CD4-positive, alpha-beta memory T cell (primary cell): ENCODE measurements at regions of chr2 and their contacts with region 1.

Region 1: DNA sequence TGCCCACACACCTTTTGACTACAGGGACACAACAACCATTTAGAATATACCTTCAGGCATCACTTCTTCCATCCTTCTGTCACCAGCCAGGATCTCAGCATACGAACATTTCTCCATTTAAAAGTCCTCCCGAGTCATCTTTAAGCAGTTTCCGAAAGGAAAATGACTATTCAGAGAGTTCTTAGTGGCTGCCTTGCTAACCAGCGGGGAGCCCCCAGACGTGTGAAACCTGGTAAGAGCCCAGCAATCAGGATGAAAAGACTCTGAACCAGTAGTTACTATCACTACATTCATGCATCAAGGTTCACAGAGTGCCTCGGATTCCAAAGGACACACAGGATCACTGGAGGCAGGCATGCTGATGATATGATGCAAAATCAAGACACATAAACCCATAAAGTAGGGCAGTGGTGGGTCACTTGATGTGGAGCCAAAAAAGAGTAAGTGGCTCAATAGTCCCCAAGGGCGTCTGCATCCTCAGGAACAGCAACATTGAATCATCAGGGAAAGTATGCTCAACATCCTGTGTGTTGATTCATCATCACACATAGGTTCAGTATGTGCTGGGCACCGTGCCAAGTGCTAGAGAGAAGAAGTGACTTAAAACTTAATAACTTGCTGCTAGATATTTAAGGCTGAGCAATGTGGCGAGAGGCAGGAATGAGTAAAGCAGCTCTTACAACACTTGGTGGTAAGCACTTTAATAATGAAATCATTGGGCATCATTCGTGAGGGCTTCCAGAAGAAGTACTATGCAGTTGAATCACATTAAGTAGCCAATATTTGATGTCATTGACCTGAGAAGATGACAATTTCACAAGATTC is 4.4 kb downstream of the CCL20 start:
- DNase-seq: peak; percentile 47 to 89 (median 58)
- H3K4me3 ChIP-seq: no peak overlapping the region
- H3K4me3 Mint-ChIP-seq: peak overlapping the region in 6 of 8 donors; percentile 3 to 53 (median 45)
- H3K27ac ChIP-seq: peak overlapping the region; percentile 40
- H3K27ac Mint-ChIP-seq: peak overlapping the region; percentile 29 to 89 (median 79)
- H3K4me1 ChIP-seq: peaks cover 16% of the 10 kb centered on the region
- H3K4me1 Mint-ChIP-seq: peaks cover 14 to 35% (median 21%) of the 10 kb centered on the region in 4 donors
- H3K27me3 ChIP-seq: no peaks in the 10 kb centered on the region
- H3K27me3 Mint-ChIP-seq: peaks cover 0 to 3% of the 10 kb centered on the region in 2 donors

Region 2: DNA sequence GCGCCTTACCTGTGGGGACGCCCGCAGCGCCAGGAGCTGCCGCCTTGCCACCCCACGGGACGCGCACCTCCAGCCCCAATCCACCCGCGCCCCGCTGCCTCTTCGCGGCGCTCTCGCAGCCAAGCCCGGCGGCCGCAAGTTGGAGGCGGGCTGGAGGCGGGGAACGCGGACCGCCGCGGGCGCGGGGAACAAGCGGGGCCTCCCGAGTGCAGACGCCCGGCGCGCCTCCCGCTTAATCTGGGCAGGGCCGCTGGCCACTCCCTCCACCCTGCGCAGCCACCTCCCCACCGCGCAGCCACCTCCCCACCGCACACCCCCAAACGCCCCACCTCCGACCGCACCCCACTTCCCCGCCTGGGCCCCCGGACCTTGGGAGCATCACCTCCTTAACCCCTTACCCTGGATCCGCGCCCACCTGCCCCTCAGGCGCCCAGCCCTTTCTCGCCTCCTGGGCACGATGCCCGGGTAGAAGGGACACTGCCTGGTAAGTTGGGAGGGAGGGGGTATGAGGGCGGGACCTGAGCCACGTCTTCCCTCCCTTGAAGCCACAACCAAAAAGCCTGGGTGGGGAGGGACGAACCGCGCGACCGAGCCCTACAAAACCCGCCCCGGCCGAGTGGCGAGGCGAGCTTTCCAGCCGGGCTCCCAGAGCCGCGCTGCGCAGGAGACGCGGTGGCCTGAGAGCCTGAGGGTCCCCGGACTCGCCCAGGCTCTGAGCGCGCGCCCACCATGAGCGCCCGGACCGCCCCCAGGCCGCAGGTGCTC is 653.9 kb before region 1 on chr2 and contains the starts of genes COL4A3 and COL4A4:
- CTCF ChIA-PET with region 1: no interaction called
- POLR2A ChIA-PET with region 1: no interaction called
- intact Hi-C with region 1: no loop called
- DNase-seq: no peak
- H3K4me3 ChIP-seq: no peak within 1 kb of the TSS
- H3K4me3 Mint-ChIP-seq: peak within 1 kb of the TSS; percentile 65 to 75 (median 70)
- H3K27ac ChIP-seq: no peak within 1 kb of the TSS
- H3K27ac Mint-ChIP-seq: no peak within 1 kb of the TSS
- H3K4me1 ChIP-seq: no peaks in the 10 kb centered on the region
- H3K4me1 Mint-ChIP-seq: peaks cover 0 to 18% (median 9%) of the 10 kb centered on the region in 4 donors
- H3K27me3 ChIP-seq: no peaks in the 10 kb centered on the region
- H3K27me3 Mint-ChIP-seq: peaks cover 29 to 42% of the 10 kb centered on the region in 2 donors
- total RNA-seq, gene COL4A3: 0.03 TPM in 1 of 2 experiments, not detected in the other
- total RNA-seq, gene COL4A4: 0.03 TPM in 1 of 2 experiments, not detected in the other

Region 3: DNA sequence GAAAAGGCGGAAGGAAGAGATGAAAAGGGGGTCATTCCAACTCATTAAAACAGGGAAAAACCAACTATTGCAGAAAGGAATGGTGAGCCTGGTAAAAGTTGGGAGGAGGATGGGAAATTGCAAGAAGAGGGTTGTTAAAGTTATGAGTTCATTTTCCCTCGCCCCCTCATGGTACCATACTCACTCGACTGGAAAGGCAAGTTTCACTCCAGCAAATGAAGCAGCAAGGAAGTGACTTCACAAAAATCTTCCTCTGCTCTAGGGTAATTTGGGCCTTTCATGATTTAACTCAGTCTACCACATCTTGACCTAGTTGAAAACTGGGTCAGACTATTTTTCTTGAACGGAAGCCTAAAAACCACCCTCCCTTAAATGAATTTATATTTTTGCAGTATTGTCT is 30.5 kb after region 1 on chr2:
- CTCF ChIA-PET with region 1: interaction called, 3 read pairs
- POLR2A ChIA-PET with region 1: interaction called, 3 read pairs
- intact Hi-C with region 1: loop called (anchors 2 kb)
- DNase-seq: peak; percentile 52 to 77 (median 62)
- H3K4me3 ChIP-seq: peak overlapping the region in 1 of 2 donors; percentile 29
- H3K4me3 Mint-ChIP-seq: peak overlapping the region; percentile 72 to 86 (median 84)
- H3K27ac ChIP-seq: peak overlapping the region; percentile 80
- H3K27ac Mint-ChIP-seq: peak overlapping the region; percentile 95 to 98 (median 96)
- H3K4me1 ChIP-seq: peaks cover 25% of the 10 kb centered on the region
- H3K4me1 Mint-ChIP-seq: peaks cover 20 to 36% (median 25%) of the 10 kb centered on the region in 4 donors
- H3K27me3 ChIP-seq: no peaks in the 10 kb centered on the region
- H3K27me3 Mint-ChIP-seq: peaks cover 0 to 5% of the 10 kb centered on the region in 2 donors